Right ventricle myocardium inferior (tissue), 1 donor: ENCODE measurements at regions of chr14 and their contacts with region 1.

Region 1: GRCh38 chr14:30369502-30370180 is 189.3 kb upstream of the G2E3 start:
- DNase-seq: no peak
- ATAC-seq: no peak

Region 2: DNA sequence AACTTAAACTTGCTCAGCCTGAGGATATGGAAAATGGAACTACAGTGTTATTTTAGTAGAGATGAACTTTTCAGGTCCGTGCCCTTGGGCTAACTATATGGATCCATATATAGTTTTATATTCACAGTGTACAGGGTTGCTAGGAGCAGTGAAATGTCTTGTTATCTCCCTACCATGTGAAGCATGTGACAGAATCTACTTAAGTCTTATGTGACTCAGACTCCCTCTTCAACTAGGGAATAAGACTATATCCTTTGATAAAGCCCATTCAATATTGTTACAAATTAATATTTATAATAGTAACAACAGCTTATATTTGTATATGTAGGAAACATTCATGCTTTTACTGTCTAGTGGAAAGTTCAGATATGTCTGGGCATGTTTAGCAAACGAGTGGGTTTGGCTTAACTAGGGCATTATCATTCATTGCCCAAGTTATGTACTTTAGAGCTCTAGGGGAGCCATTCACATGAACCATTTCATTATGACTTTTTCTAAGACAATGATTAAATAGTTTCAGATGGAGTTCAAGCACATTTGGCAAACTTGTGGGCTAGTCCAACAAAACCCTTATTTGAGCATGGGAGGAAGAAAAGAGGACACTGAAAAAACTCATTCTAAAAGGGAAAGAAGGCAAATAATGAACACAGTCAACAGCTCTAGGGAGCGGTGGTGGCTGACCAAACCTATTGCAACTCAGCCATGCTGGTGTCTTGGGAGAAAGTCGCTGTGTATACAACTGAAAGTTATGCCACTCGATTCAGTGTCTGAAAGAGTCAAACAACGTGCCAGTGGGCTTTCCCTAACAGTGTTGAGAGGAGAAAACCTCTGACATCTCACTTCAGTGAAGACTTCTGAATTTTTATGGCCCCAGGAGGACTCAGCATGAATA is 116.6 kb before region 1 on chr14:
- intact Hi-C with region 1: no loop called
- DNase-seq: no peak
- ATAC-seq: no peak

Region 3: DNA sequence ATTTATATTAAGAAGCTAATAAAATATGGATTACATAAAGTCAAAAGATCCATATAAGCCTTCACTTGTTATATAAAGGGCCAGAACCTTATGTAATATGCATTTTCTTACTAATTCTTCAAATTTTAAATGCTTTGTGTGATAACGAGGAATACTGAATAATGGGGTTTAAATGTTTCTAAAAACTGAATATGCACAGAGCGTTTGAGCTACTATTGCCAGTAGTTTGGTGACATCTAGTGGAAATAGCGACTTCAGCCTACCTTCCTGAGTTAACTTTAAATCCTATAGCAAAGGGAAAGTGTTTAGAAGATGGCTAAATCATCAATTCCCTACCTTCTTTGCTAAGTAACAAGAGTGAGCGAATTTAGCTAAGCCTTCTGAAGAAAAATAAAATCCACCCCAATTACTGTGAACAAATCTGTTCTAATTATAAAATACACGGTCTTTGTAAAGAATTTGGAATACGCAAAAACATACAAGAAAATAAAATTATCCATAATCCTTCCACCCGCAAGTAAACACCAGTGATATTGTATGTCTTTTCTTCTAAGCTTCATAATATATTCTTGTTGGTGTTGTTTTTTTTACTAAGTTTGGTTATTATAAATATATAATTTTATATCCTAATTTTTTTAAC is 73.8 kb after region 1 on chr14:
- intact Hi-C with region 1: loop called (anchors 5 kb)
- DNase-seq: no peak
- ATAC-seq: no peak